ENCODE measurements at regions of chr1 and their contacts with region 1.

Region 1: DNA sequence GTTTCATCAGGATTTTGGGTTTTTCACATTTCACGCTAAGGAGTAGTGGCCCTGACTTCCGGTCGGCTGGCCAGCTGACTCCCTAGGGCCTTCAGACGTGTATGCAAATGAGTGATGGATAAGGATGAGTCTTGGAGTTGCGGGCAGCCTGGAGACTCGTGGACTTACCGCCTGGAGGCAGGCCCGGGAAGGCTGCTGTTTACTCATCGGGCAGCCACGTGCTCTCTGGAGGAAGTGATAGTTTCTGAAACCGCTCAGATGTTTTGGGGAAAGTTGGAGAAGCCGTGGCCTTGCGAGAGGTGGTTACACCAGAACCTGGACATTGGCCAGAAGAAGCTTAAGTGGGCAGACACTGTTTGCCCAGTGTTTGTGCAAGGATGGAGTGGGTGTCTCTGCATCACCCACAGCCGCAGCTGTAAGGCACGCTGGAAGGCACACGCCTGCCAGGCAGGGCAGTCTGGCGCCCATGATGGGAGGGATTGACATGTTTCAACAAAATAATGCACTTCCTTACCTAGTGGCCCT is 23.1 kb upstream of the TNFRSF1B start:
- DNase-seq: no peak
- ATAC-seq: peak; percentile 72
- H3K4me3 Mint-ChIP-seq: peak overlapping the region; percentile 41
- H3K27ac Mint-ChIP-seq: peak overlapping the region; percentile 79
- H3K4me1 Mint-ChIP-seq: peaks cover 71% of the 10 kb centered on the region
- H3K27me3 Mint-ChIP-seq: no peaks in the 10 kb centered on the region
- CTCF ChIP-seq: no peak

Region 2: GRCh38 chr1:11784993-11785769 is 358.5 kb before region 1 on chr1:
- CTCF ChIA-PET with region 1: no interaction called
- POLR2A ChIA-PET with region 1: interaction called, 11 read pairs
- intact Hi-C with region 1: no loop called
- DNase-seq: peak; percentile 55
- ATAC-seq: peak; percentile 86
- H3K4me3 Mint-ChIP-seq: peak overlapping the region; percentile 44
- H3K27ac Mint-ChIP-seq: peak overlapping the region; percentile 71
- H3K4me1 Mint-ChIP-seq: peaks cover 22% of the 10 kb centered on the region
- H3K27me3 Mint-ChIP-seq: no peaks in the 10 kb centered on the region
- CTCF ChIP-seq: peak; percentile 88

Region 3: GRCh38 chr1:12161662-12162458 is 18.2 kb after region 1 on chr1:
- CTCF ChIA-PET with region 1: no interaction called
- POLR2A ChIA-PET with region 1: interaction called, 16 read pairs
- intact Hi-C with region 1: no loop called
- DNase-seq: peak; percentile 55
- ATAC-seq: peak; percentile 78
- H3K4me3 Mint-ChIP-seq: peak overlapping the region; percentile 63
- H3K27ac Mint-ChIP-seq: peak overlapping the region; percentile 91
- H3K4me1 Mint-ChIP-seq: peaks cover 74% of the 10 kb centered on the region
- H3K27me3 Mint-ChIP-seq: no peaks in the 10 kb centered on the region
- CTCF ChIP-seq: no peak

Region 4: DNA sequence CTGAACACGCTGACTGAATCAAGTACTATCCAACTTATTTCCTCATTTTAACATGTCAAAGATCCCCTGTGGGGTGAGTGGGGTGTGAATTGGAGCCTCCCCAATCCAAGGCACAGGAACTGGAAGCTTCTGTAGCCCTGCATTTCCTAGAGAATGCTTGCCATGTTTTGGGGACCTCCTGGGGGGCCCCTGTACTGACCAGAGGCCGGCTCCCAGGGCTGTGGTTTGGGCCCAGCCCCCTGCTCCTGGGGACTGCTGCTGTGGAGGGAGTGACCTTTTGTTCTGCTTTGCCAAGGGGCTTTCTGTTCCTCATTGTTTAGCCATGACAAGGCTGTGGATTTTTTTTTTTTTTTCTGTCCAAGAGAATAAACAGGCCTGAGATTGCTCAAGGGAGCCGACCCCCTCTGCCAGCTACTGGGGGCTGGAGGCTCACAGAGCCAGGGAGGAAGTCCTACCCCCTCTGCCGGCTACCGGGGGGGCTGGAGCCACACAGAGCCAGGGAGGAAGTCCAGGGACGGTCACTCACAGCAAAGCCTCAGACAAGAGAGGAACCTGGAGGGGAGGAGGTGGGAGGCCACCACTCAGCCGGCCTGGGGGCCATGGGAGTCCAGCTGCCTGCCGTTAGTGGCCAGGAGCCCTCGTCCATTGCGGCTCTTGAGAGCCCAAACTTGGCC is 40.5 kb after region 1 on chr1:
- CTCF ChIA-PET with region 1: no interaction called
- POLR2A ChIA-PET with region 1: interaction called, 15 read pairs
- intact Hi-C with region 1: loop called (anchors 5 kb)
- DNase-seq: no peak
- ATAC-seq: peak; percentile 71
- H3K4me3 Mint-ChIP-seq: peak overlapping the region; percentile 48
- H3K27ac Mint-ChIP-seq: peak overlapping the region; percentile 70
- H3K4me1 Mint-ChIP-seq: peaks cover 73% of the 10 kb centered on the region
- H3K27me3 Mint-ChIP-seq: no peaks in the 10 kb centered on the region
- CTCF ChIP-seq: no peak

Region 5: GRCh38 chr1:13965770-13966398 is 1822.2 kb after region 1 on chr1:
- CTCF ChIA-PET with region 1: no interaction called
- POLR2A ChIA-PET with region 1: no interaction called
- intact Hi-C with region 1: no loop called
- DNase-seq: no peak
- ATAC-seq: no peak
- H3K4me3 Mint-ChIP-seq: no peak overlapping the region
- H3K27ac Mint-ChIP-seq: no peak overlapping the region
- H3K4me1 Mint-ChIP-seq: no peaks in the 10 kb centered on the region
- H3K27me3 Mint-ChIP-seq: peaks cover 31% of the 10 kb centered on the region
- CTCF ChIP-seq: no peak

Measured in activated B cell treated with CpG ODN at 0.5 μM for 24 hours (primary cell).